Naive thymus-derived CD4-positive, alpha-beta T cell (primary cell): ENCODE measurements at regions of chr7 and their contacts with region 1.

Region 1: GRCh38 chr7:102464577-102465280 is at the starts of genes ALKBH4 and LRWD1:
- DNase-seq: peak; percentile 84 to 99 (median 91)
- ATAC-seq: peak; percentile 99
- H3K4me3 ChIP-seq: peak within 1 kb of the TSS; percentile 99
- H3K4me3 Mint-ChIP-seq: peak within 1 kb of the TSS; percentile 82 to 95 (median 90)
- H3K27ac ChIP-seq: peak within 1 kb of the TSS; percentile 84
- H3K27ac Mint-ChIP-seq: peak within 1 kb of the TSS; percentile 54 to 90 (median 79)
- H3K4me1 ChIP-seq: peaks cover 19 to 22% of the 10 kb centered on the region in 2 donors
- H3K4me1 Mint-ChIP-seq: peaks cover 20 to 46% (median 37%) of the 10 kb centered on the region in 7 donors
- H3K27me3 ChIP-seq: no peaks in the 10 kb centered on the region
- H3K27me3 Mint-ChIP-seq: no peaks in the 10 kb centered on the region
- total RNA-seq, gene ALKBH4: 4.0 to 14.3 (median 10.1) TPM
- total RNA-seq, gene LRWD1: 12.4 to 25.3 (median 24.7) TPM

Region 2: GRCh38 chr7:101373812-101374614 is 1090.7 kb before region 1 on chr7:
- CTCF ChIA-PET with region 1: no interaction called
- POLR2A ChIA-PET with region 1: no interaction called
- intact Hi-C with region 1: no loop called
- DNase-seq: no peak
- ATAC-seq: no peak
- H3K4me3 ChIP-seq: no peak overlapping the region
- H3K4me3 Mint-ChIP-seq: no peak overlapping the region
- H3K27ac ChIP-seq: no peak overlapping the region
- H3K27ac Mint-ChIP-seq: peak overlapping the region in 2 of 9 donors; percentile 54 to 74
- H3K4me1 ChIP-seq: peaks cover 0 to 6% of the 10 kb centered on the region in 2 donors
- H3K4me1 Mint-ChIP-seq: peaks cover 6 to 14% (median 8%) of the 10 kb centered on the region in 7 donors
- H3K27me3 ChIP-seq: no peaks in the 10 kb centered on the region
- H3K27me3 Mint-ChIP-seq: peaks cover 5 to 15% (median 11%) of the 10 kb centered on the region in 5 donors

Region 3: GRCh38 chr7:102286237-102287110 is 178.3 kb before region 1 on chr7 and contains the start of gene SH2B2:
- CTCF ChIA-PET with region 1: no interaction called
- POLR2A ChIA-PET with region 1: no interaction called
- intact Hi-C with region 1: loop called (anchors 5 to 10 kb)
- DNase-seq: peak; percentile 31 to 62 (median 50)
- ATAC-seq: peak; percentile 73
- H3K4me3 ChIP-seq: peak within 1 kb of the TSS; percentile 67
- H3K4me3 Mint-ChIP-seq: peak within 1 kb of the TSS; percentile 71 to 88 (median 80)
- H3K27ac ChIP-seq: peak within 1 kb of the TSS; percentile 61
- H3K27ac Mint-ChIP-seq: peak within 1 kb of the TSS in 4 of 9 donors; percentile 33 to 73 (median 67)
- H3K4me1 ChIP-seq: peaks cover 16 to 17% of the 10 kb centered on the region in 2 donors
- H3K4me1 Mint-ChIP-seq: peaks cover 16 to 37% (median 31%) of the 10 kb centered on the region in 7 donors
- H3K27me3 ChIP-seq: no peaks in the 10 kb centered on the region
- H3K27me3 Mint-ChIP-seq: peaks cover 0 to 22% (median 0%) of the 10 kb centered on the region in 5 donors
- total RNA-seq, gene SH2B2: 0.87 to 10.9 (median 2.0) TPM

Region 4: DNA sequence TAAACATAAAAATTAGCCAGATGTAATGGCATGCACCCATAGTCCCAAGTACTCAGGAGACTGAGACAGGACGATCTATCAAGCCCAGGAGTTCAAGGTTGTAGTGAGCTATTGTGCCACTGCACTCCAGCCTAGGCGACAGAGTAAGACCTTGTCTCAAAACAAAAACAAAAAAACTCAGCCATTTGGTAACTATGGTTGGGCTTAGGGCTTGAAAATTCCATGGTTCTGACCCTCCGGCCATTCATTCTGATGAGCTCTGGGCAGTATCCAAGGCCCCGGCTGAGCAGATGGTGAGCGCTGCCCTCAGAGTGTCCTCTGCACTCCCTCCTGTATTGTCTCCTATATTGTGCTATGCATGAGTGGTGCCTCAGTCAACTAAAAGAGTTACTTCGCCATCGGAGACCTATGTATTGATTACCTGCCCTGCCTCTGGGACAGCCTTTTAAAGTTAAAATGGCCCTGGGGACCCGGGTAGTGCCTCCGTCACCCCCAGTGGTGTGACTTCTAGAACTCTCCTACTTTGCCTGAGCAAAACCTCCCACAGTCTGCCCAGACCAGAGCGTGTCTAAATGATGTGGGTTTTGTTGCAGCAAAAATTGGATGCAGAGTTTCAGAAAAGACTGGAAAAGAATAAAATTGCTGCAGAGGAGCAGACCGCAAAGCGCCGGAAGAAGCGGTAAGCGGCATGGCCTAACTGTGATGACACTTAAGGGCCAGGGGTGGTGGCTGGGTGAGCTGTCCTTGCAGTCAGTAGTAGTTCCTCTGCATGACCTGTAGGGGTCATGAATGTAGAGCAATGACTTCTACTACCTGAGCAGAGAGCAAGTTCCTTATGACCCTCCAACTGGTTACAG is 60.5 kb before region 1 on chr7:
- CTCF ChIA-PET with region 1: interaction called, 8 read pairs
- POLR2A ChIA-PET with region 1: interaction called, 6 read pairs
- intact Hi-C with region 1: loop called (anchors 1 kb)
- DNase-seq: peak in 7 of 9 donors; percentile 48 to 71 (median 62)
- ATAC-seq: peak; percentile 100
- H3K4me3 ChIP-seq: no peak overlapping the region
- H3K4me3 Mint-ChIP-seq: no peak overlapping the region
- H3K27ac ChIP-seq: no peak overlapping the region
- H3K27ac Mint-ChIP-seq: peak overlapping the region in 5 of 9 donors; percentile 8 to 38 (median 25)
- H3K4me1 ChIP-seq: no peaks in the 10 kb centered on the region
- H3K4me1 Mint-ChIP-seq: peaks cover 0 to 14% (median 8%) of the 10 kb centered on the region in 7 donors
- H3K27me3 ChIP-seq: no peaks in the 10 kb centered on the region
- H3K27me3 Mint-ChIP-seq: no peaks in the 10 kb centered on the region

Region 5: GRCh38 chr7:102425639-102426267 is 39.0 kb before region 1 on chr7:
- CTCF ChIA-PET with region 1: interaction called, 5 read pairs
- POLR2A ChIA-PET with region 1: interaction called, 28 read pairs
- intact Hi-C with region 1: loop called in 1 of 2 experiments (anchors 2 kb)
- DNase-seq: peak in 8 of 9 donors; percentile 63 to 87 (median 78)
- ATAC-seq: peak; percentile 90
- H3K4me3 ChIP-seq: peak overlapping the region; percentile 77
- H3K4me3 Mint-ChIP-seq: peak overlapping the region; percentile 84 to 96 (median 88)
- H3K27ac ChIP-seq: peak overlapping the region; percentile 96
- H3K27ac Mint-ChIP-seq: peak overlapping the region; percentile 98 to 100 (median 100)
- H3K4me1 ChIP-seq: peaks cover 40 to 77% of the 10 kb centered on the region in 2 donors
- H3K4me1 Mint-ChIP-seq: peaks cover 54 to 86% (median 65%) of the 10 kb centered on the region in 7 donors
- H3K27me3 ChIP-seq: no peaks in the 10 kb centered on the region
- H3K27me3 Mint-ChIP-seq: no peaks in the 10 kb centered on the region